GM12878 (cell line): ENCODE measurements at regions of chrX and their contacts with region 1.

Region 1: GRCh38 chrX:71550578-71550977 is 17.7 kb downstream of the OGT start:
- DNase-seq: no peak
- ATAC-seq: 0 out of 3 replicates have a peak, but pooled peaks have one; percentile 12
- H3K4me3 ChIP-seq: no peak overlapping the region
- H3K27ac ChIP-seq: no peak overlapping the region
- H3K4me1 ChIP-seq: no peaks in the 10 kb centered on the region
- H3K27me3 ChIP-seq: no peaks in the 10 kb centered on the region
- CTCF ChIP-seq: no peak
- EP300 ChIP-seq: no peak
- POLR2A ChIP-seq: no peak
- RAD21 ChIP-seq: no peak

Region 2: GRCh38 chrX:71439420-71439819 is 111.2 kb before region 1 on chrX:
- CTCF ChIA-PET with region 1: no interaction called
- POLR2A ChIA-PET with region 1: no interaction called
- RAD21 ChIA-PET with region 1: no interaction called
- SMC1A ChIA-PET with region 1: no interaction called
- in situ Hi-C with region 1: no loop called
- intact Hi-C with region 1: loop called (anchors 10 kb)
- DNase-seq: no peak
- ATAC-seq: peak; percentile 42
- H3K4me3 ChIP-seq: no peak overlapping the region
- H3K27ac ChIP-seq: no peak overlapping the region
- H3K4me1 ChIP-seq: no peaks in the 10 kb centered on the region
- H3K27me3 ChIP-seq: no peaks in the 10 kb centered on the region
- CTCF ChIP-seq: no peak
- EP300 ChIP-seq: no peak
- POLR2A ChIP-seq: no peak
- RAD21 ChIP-seq: no peak

Region 3: DNA sequence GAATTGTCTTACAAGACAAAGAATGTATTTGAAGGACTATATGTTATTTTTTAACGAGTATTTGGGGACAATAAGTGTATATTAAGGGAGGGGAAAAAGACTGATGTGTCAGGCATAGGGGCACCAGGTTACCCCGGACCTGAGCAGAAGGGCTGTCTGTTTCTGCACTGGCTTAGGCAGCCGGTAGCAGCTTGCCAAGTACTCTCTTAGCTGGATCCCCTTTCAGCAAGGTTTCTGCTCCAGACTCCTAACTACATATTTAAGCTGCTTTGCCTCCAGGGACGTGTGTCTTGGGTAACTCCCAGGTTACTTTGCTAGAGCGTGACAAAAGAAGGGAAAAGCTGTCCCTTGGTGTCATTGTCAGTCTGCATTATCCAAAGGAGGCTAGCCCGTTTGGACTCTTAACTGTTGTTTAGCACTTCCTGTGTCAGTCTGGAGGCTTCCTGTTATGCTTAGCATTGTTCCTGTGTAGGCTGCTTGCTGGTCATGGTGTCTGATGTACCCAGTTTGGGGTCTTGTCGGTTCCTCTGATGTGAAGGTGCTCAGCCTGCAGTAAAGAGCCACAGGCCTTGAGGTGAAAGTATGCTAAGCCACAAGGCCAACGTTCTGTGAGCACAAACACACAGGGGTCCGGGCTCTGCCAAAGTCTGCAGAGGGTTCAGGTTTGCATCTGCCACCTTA is 56.1 kb after region 1 on chrX:
- CTCF ChIA-PET with region 1: no interaction called
- POLR2A ChIA-PET with region 1: no interaction called
- RAD21 ChIA-PET with region 1: no interaction called
- SMC1A ChIA-PET with region 1: no interaction called
- in situ Hi-C with region 1: no loop called
- intact Hi-C with region 1: no loop called
- DNase-seq: no peak
- ATAC-seq: peak; percentile 38
- H3K4me3 ChIP-seq: no peak overlapping the region
- H3K27ac ChIP-seq: no peak overlapping the region
- H3K4me1 ChIP-seq: no peaks in the 10 kb centered on the region
- H3K27me3 ChIP-seq: no peaks in the 10 kb centered on the region; a peak in 1 of 4 replicates
- CTCF ChIP-seq: no peak
- EP300 ChIP-seq: no peak
- POLR2A ChIP-seq: no peak
- RAD21 ChIP-seq: no peak